ENCODE measurements at regions of chr17 and their contacts with region 1.

Region 1: GRCh38 chr17:1516388-1517161 is at the start of gene INPP5K:
- DNase-seq: peak; percentile 98
- ATAC-seq: peak; percentile 88 to 89
- H3K4me3 ChIP-seq: peak within 1 kb of the TSS; percentile 81 to 98 (median 90)
- H3K27ac ChIP-seq: peak within 1 kb of the TSS; percentile 91 to 99 (median 98)
- H3K4me1 ChIP-seq: peaks cover 52 to 55% of the 10 kb centered on the region in 2 donors
- H3K27me3 ChIP-seq: no peaks in the 10 kb centered on the region
- CTCF ChIP-seq: peak in 1 of 5 experiments; percentile 28
- POLR2A ChIP-seq: peak; percentile 84 to 92
- total RNA-seq, gene INPP5K: 102 to 196 (median 114) TPM

Region 2: GRCh38 chr17:1275962-1276736 is 240.4 kb before region 1 on chr17:
- in situ Hi-C with region 1: loop called in 3 of 4 experiments (anchors 10 to 25 kb)
- intact Hi-C with region 1: no loop called
- DNase-seq: peak in 1 of 2 donors; percentile 46
- ATAC-seq: peak; percentile 71 to 77
- H3K4me3 ChIP-seq: no peak overlapping the region
- H3K27ac ChIP-seq: no peak overlapping the region
- H3K4me1 ChIP-seq: no peaks in the 10 kb centered on the region
- H3K27me3 ChIP-seq: peaks cover 5 to 12% (median 8%) of the 10 kb centered on the region in 3 donors
- CTCF ChIP-seq: peak; percentile 62 to 91 (median 80)
- POLR2A ChIP-seq: no peak

Region 3: GRCh38 chr17:1365445-1366039 is 151.0 kb before region 1 on chr17:
- in situ Hi-C with region 1: loop called in 3 of 4 experiments (anchors 5 to 25 kb)
- intact Hi-C with region 1: loop called (anchors 1 kb)
- DNase-seq: peak; percentile 60 to 66
- ATAC-seq: peak; percentile 76 to 80
- H3K4me3 ChIP-seq: peak overlapping the region in 1 of 4 donors; percentile 15
- H3K27ac ChIP-seq: peak overlapping the region; percentile 74 to 81 (median 76)
- H3K4me1 ChIP-seq: peaks cover 83 to 86% of the 10 kb centered on the region in 2 donors
- H3K27me3 ChIP-seq: no peaks in the 10 kb centered on the region
- CTCF ChIP-seq: peak; percentile 77 to 91 (median 88)
- POLR2A ChIP-seq: no peak

Region 4: DNA sequence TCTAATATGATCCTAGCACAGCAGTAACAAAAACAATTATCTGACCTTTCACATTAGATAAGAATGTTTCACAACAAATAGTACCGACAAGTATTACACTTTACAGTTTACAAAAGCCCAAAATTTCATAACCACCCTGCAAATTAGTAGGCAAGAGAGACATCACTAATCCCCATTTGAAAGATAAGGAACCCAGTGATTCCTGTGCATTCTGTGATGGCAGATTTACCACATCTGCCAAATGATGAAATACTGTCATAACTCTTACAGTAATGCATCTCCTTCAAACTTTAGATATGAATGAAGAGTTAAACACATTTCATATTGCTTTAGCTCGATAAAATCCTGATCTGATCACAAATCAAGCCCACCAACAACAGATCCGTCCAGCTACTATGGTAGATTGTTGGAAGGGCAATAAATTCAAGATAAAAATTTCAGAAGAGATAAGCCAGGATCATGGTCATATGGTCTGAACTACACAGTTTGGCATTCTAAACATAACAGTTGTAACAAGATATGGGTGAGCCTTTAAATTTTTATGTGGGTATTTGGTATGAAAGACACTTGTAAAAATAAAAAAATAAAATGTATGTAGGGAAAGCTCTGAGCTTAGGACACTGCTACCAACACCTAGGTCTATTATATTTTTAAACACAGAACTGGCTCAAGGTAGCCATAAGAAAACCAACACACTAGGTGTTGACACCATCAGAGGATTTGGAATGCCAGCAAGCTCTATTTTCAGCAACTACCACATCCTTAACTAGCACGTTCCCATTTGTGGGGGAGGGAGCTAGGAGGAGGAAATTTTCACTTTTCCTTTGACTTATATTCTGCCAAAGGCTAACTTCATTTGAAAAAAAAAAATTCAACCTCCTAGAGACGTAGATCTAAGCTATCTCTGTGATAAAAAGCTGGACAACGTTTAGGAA is 125.9 kb before region 1 on chr17:
- in situ Hi-C with region 1: no loop called
- intact Hi-C with region 1: no loop called
- DNase-seq: peak; percentile 61 to 64
- ATAC-seq: peak; percentile 85 to 95
- H3K4me3 ChIP-seq: peak overlapping the region; percentile 21 to 35 (median 25)
- H3K27ac ChIP-seq: peak overlapping the region; percentile 96 to 100 (median 98)
- H3K4me1 ChIP-seq: peaks cover 94 to 98% of the 10 kb centered on the region in 2 donors
- H3K27me3 ChIP-seq: no peaks in the 10 kb centered on the region
- CTCF ChIP-seq: no peak
- POLR2A ChIP-seq: peak in 1 of 2 donors; percentile 25

Region 5: GRCh38 chr17:1495265-1495989 is 21.1 kb before region 1 on chr17:
- in situ Hi-C with region 1: no loop called
- intact Hi-C with region 1: loop called (anchors 1 kb)
- DNase-seq: peak; percentile 64 to 89
- ATAC-seq: peak; percentile 55 to 76
- H3K4me3 ChIP-seq: no peak overlapping the region
- H3K27ac ChIP-seq: peak overlapping the region; percentile 65 to 91 (median 80)
- H3K4me1 ChIP-seq: peaks cover 42 to 51% of the 10 kb centered on the region in 2 donors
- H3K27me3 ChIP-seq: no peaks in the 10 kb centered on the region
- CTCF ChIP-seq: no peak
- POLR2A ChIP-seq: no peak

Region 6: GRCh38 chr17:1764284-1764683 is 247.7 kb after region 1 on chr17:
- in situ Hi-C with region 1: no loop called
- intact Hi-C with region 1: no loop called
- DNase-seq: peak; percentile 83
- ATAC-seq: peak; percentile 23 to 42
- H3K4me3 ChIP-seq: peak overlapping the region; percentile 65 to 82 (median 74)
- H3K27ac ChIP-seq: peak overlapping the region; percentile 97 to 100 (median 98)
- H3K4me1 ChIP-seq: peaks cover 40 to 48% of the 10 kb centered on the region in 2 donors
- H3K27me3 ChIP-seq: no peaks in the 10 kb centered on the region
- CTCF ChIP-seq: no peak
- POLR2A ChIP-seq: peak; percentile 53 to 70

Region 7: DNA sequence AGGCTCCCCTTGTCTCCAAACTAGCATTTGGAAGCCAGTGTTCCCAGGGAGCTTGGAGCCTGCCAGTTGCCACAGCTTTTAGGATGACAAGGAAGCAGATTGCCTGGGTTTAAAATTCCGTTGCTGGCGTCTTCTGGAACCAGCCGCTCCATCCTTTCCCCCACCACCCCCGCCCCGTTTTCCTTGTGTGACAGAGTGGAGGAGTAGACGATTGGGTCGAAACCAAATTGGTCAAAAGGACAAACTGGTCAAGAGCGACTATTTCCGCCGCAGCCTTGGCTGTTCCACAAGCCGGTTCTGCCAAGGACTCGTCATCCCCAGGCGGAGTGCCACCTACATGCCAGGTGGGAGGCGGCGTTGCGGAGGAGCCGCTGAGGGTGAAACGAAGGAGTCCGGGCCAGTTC is 404.4 kb after region 1 on chr17:
- in situ Hi-C with region 1: no loop called
- intact Hi-C with region 1: no loop called
- DNase-seq: peak; percentile 58 to 79
- ATAC-seq: peak; percentile 93 to 94
- H3K4me3 ChIP-seq: no peak overlapping the region
- H3K27ac ChIP-seq: peak overlapping the region; percentile 42 to 66 (median 50)
- H3K4me1 ChIP-seq: peaks cover 8% of the 10 kb centered on the region in 2 donors
- H3K27me3 ChIP-seq: no peaks in the 10 kb centered on the region
- CTCF ChIP-seq: no peak
- POLR2A ChIP-seq: no peak

Measured in gastrocnemius medialis (tissue), 4 donors.